Transverse colon (tissue), 4 donors: ENCODE measurements at regions of chr7 and their contacts with region 1.

Region 1: GRCh38 chr7:129664029-129665012 is 52.8 kb downstream of the NRF1 start:
- DNase-seq: no peak
- H3K4me3 ChIP-seq: no peak overlapping the region
- H3K27ac ChIP-seq: no peak overlapping the region
- H3K4me1 ChIP-seq: peaks cover 0 to 4% (median 0%) of the 10 kb centered on the region in 4 donors
- H3K27me3 ChIP-seq: no peaks in the 10 kb centered on the region
- CTCF ChIP-seq: peak; percentile 28 to 44 (median 31)
- EP300 ChIP-seq: no peak
- POLR2A ChIP-seq: no peak

Region 2: GRCh38 chr7:129646369-129647021 is 17.8 kb before region 1 on chr7:
- in situ Hi-C with region 1: no loop called
- intact Hi-C with region 1: loop called (anchors 1 kb)
- DNase-seq: no peak
- H3K4me3 ChIP-seq: no peak overlapping the region
- H3K27ac ChIP-seq: no peak overlapping the region
- H3K4me1 ChIP-seq: no peaks in the 10 kb centered on the region
- H3K27me3 ChIP-seq: no peaks in the 10 kb centered on the region
- CTCF ChIP-seq: no peak
- EP300 ChIP-seq: no peak
- POLR2A ChIP-seq: no peak

Region 3: GRCh38 chr7:129804890-129805719 is 140.8 kb after region 1 on chr7:
- in situ Hi-C with region 1: loop called in 2 of 4 experiments (anchors 10 to 25 kb)
- intact Hi-C with region 1: no loop called
- DNase-seq: no peak
- H3K4me3 ChIP-seq: no peak overlapping the region
- H3K27ac ChIP-seq: no peak overlapping the region
- H3K4me1 ChIP-seq: no peaks in the 10 kb centered on the region
- H3K27me3 ChIP-seq: peaks cover 9% of the 10 kb centered on the region
- CTCF ChIP-seq: no peak
- EP300 ChIP-seq: no peak
- POLR2A ChIP-seq: no peak

Region 4: GRCh38 chr7:129825496-129826267 is 161.4 kb after region 1 on chr7:
- in situ Hi-C with region 1: loop called in 1 of 4 experiments (anchors 25 kb)
- intact Hi-C with region 1: no loop called
- DNase-seq: peak; percentile 92
- H3K4me3 ChIP-seq: peak overlapping the region; percentile 39 to 63 (median 49)
- H3K27ac ChIP-seq: peak overlapping the region; percentile 31 to 74 (median 58)
- H3K4me1 ChIP-seq: peaks cover 6 to 26% (median 20%) of the 10 kb centered on the region in 4 donors
- H3K27me3 ChIP-seq: no peaks in the 10 kb centered on the region
- CTCF ChIP-seq: peak; percentile 54 to 99 (median 99)
- EP300 ChIP-seq: no peak
- POLR2A ChIP-seq: no peak

Region 5: DNA sequence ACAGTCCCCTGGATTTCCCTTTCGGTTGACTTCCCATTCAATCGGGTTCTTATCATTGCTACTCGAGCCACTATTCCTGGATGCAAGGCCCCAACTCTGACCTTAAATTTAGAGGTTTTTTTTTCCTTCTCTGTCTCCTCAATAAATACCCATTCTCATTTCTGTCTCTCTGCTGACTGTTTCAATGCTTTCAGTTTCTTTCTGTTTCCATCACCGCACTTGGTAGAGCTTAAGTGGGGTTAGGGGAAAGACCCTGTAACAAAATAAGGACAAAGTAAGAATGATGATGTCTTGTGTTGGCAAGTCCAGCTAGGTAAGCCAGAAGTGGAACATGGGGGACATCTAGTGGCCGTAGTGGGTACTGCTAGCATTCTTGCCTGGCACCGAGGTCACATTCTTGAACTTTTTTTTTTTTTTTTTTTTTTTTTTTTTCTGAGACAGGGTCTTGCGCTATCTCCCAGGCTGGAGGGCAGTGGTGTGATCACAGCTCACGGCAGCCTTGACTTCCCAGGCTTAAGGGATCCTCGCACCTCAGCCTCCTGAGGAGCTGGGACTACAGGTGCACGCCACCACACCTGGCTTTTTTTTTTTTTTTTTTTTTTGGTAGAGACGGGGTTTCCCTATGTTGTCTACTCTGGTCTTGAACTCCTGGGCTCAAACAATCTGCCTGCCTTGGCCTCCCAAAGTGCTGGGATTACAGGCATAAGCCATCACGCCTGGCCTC is 346.5 kb after region 1 on chr7:
- in situ Hi-C with region 1: loop called in 2 of 4 experiments (anchors 25 kb)
- intact Hi-C with region 1: no loop called
- DNase-seq: peak; percentile 90
- H3K4me3 ChIP-seq: no peak overlapping the region
- H3K27ac ChIP-seq: peak overlapping the region in 1 of 4 donors; percentile 18
- H3K4me1 ChIP-seq: peaks cover 0 to 4% (median 0%) of the 10 kb centered on the region in 4 donors
- H3K27me3 ChIP-seq: no peaks in the 10 kb centered on the region
- CTCF ChIP-seq: peak; percentile 92 to 98 (median 92)
- EP300 ChIP-seq: no peak
- POLR2A ChIP-seq: no peak